ENCODE measurements at regions of chr5 and their contacts with region 1.

Region 1: DNA sequence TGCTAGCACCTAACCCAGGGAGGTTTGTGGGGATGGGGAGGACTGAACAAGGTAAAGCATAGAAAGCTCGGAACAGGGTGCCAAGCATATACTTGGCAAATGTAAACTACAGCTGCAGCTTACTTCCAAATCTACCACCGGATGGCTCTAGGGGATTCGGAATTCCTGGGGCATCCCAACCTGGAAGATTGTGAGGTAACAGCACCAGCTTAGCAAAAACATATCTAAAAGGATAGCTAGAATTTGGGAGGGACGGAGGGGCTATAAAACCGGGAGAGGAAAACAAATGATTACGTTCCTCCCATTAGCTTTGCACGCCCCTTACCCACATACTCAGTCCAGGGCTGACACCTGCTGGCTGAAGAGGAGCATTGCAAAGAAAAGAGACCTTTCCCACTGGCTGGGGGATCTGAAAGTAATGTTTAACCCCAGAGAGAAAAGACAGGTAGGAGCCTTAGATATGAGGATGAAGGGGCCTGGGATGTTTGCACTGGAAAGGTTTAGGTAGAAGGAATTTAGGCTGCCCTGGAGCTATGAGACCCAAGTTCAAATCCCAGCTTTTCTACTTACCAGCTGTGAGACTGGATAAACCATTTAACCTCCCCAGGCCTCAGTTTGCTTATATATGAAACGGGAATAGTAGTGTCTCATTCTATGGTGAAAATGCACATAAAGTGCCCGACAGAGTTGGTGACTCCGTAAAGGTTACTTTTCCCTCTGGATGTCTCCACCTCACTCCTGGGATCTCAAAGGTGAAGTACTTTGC is 73.6 kb downstream of the FAM114A2 start:
- DNase-seq: peak; percentile 91
- H3K4me3 Mint-ChIP-seq: peak overlapping the region; percentile 32
- H3K27ac Mint-ChIP-seq: no peak overlapping the region
- H3K4me1 Mint-ChIP-seq: peaks cover 6% of the 10 kb centered on the region
- H3K27me3 Mint-ChIP-seq: no peaks in the 10 kb centered on the region
- CTCF ChIP-seq: peak; percentile 96

Region 2: DNA sequence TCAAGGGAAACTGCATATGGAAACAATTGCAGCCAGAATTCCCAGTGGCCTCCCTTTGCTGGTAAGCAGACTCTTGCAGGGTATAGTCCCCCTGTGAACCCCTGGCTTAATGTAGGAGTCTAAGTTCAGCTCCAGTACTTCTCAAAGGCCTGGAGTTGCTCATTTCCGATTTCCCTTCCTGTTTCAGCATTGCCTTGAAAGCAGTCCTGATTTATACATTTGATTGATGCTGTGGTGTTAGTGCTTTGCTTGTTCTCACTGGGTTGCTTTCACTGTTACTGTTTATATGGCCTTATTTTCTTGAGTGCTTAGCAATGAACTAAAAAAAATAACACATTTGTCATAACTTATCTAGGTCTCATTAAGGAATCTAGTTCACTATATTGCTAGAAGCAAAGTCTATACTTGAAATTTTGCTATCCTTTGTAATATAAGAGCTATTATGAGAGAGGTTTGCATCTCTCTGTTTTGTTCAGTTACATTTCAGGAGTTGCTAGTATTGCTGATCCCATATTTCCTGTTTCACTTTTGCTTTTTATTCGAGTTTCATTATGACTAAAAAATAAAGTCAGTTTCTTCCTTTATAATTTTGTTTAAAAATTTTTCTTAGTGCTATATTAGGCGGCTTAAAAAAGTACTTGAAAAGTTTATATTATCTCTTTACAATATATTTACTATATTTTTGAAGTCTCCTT is 1437.6 kb before region 1 on chr5:
- CTCF ChIA-PET with region 1: interaction called, 160 read pairs
- POLR2A ChIA-PET with region 1: interaction called, 8 read pairs
- intact Hi-C with region 1: loop called (anchors 1 kb)
- DNase-seq: no peak
- H3K4me3 Mint-ChIP-seq: no peak overlapping the region
- H3K27ac Mint-ChIP-seq: no peak overlapping the region
- H3K4me1 Mint-ChIP-seq: peaks cover 15% of the 10 kb centered on the region
- H3K27me3 Mint-ChIP-seq: no peaks in the 10 kb centered on the region
- CTCF ChIP-seq: no peak

Region 3: GRCh38 chr5:152560512-152561137 is 1404.4 kb before region 1 on chr5:
- CTCF ChIA-PET with region 1: interaction called, 114 read pairs
- POLR2A ChIA-PET with region 1: no interaction called
- intact Hi-C with region 1: loop called (anchors 1 kb)
- DNase-seq: peak; percentile 82
- H3K4me3 Mint-ChIP-seq: no peak overlapping the region
- H3K27ac Mint-ChIP-seq: no peak overlapping the region
- H3K4me1 Mint-ChIP-seq: no peaks in the 10 kb centered on the region
- H3K27me3 Mint-ChIP-seq: no peaks in the 10 kb centered on the region
- CTCF ChIP-seq: peak; percentile 96

Region 4: GRCh38 chr5:153050496-153051179 is 914.4 kb before region 1 on chr5:
- CTCF ChIA-PET with region 1: no interaction called
- POLR2A ChIA-PET with region 1: no interaction called
- intact Hi-C with region 1: no loop called
- DNase-seq: no peak
- H3K4me3 Mint-ChIP-seq: no peak overlapping the region
- H3K27ac Mint-ChIP-seq: no peak overlapping the region
- H3K4me1 Mint-ChIP-seq: peaks cover 11% of the 10 kb centered on the region
- H3K27me3 Mint-ChIP-seq: no peaks in the 10 kb centered on the region
- CTCF ChIP-seq: no peak

Region 5: DNA sequence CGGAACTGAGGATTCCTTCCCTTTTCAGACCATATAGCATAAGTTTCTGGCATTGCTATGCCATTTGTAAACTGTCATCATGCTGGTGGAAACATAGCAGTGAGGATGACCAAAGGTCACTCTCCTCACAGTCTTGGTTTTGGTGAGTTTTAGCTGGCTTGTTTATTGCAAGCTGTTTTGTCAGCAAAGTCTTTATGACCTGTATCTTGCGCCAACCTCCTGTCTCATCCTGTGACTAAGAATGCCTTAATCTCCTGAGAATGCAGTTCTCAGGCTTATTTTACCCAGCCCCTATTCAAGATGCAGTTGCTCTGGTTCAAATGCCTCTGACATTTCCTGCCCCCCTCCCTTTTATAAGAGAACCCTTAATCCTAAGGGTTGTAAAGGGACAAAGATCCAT is 501.3 kb before region 1 on chr5:
- CTCF ChIA-PET with region 1: interaction called, 11 read pairs
- POLR2A ChIA-PET with region 1: no interaction called
- intact Hi-C with region 1: no loop called
- DNase-seq: peak; percentile 64
- H3K4me3 Mint-ChIP-seq: no peak overlapping the region
- H3K27ac Mint-ChIP-seq: no peak overlapping the region
- H3K4me1 Mint-ChIP-seq: peaks cover 13% of the 10 kb centered on the region
- H3K27me3 Mint-ChIP-seq: no peaks in the 10 kb centered on the region
- CTCF ChIP-seq: no peak

Region 6: GRCh38 chr5:153496835-153497234 is 468.2 kb before region 1 on chr5:
- CTCF ChIA-PET with region 1: interaction called, 440 read pairs
- POLR2A ChIA-PET with region 1: interaction called, 15 read pairs
- intact Hi-C with region 1: loop called (anchors 1 kb)
- DNase-seq: peak; percentile 75
- H3K4me3 Mint-ChIP-seq: no peak overlapping the region
- H3K27ac Mint-ChIP-seq: no peak overlapping the region
- H3K4me1 Mint-ChIP-seq: no peaks in the 10 kb centered on the region
- H3K27me3 Mint-ChIP-seq: no peaks in the 10 kb centered on the region
- CTCF ChIP-seq: peak; percentile 97

Region 7: DNA sequence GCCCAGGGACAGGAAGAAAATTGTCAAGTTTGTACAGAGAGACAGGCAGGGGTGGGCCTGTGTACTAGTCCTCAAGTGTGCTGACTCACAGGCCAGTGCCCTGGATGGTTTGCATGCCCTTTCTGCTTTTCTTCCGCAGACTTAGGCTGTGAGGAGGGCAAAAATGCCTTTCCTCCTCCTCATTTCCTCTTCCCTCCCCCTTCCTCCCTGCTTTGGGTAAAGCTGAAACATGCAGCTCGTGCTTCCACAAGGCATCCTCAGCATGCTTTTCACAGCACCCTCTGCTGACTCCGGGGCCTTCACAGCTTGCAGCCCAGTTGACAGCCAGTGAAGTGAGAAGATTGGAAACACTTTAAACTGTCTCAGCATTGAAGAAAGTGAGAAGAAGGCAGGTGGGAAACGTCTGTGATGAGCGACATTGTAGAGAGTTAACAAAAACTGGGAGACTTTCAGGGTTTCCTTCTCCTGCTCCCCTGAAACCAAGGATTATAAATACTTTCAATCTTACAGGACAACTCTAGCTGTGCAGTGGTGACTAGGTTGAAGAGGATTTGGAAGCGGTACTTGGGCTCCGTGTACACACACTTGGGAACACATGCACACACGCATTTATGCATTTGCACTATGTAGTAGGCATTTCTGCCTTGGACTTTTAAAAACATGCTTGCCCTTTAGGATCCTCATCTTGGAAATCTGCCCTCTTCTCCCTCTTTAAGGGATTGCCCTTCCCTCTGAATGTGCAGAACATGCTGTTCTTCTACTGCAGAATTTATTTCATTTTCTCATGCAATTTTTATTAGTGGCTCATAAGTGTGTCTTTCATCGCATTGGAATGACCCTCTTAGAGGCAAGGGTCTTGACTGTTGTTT is 335.8 kb before region 1 on chr5:
- CTCF ChIA-PET with region 1: interaction called, 3 read pairs
- POLR2A ChIA-PET with region 1: no interaction called
- intact Hi-C with region 1: loop called (anchors 1 kb)
- DNase-seq: peak; percentile 96
- H3K4me3 Mint-ChIP-seq: no peak overlapping the region
- H3K27ac Mint-ChIP-seq: no peak overlapping the region
- H3K4me1 Mint-ChIP-seq: peaks cover 11% of the 10 kb centered on the region
- H3K27me3 Mint-ChIP-seq: no peaks in the 10 kb centered on the region
- CTCF ChIP-seq: peak; percentile 56

Region 8: GRCh38 chr5:153987306-153987705 is 22.2 kb after region 1 on chr5:
- CTCF ChIA-PET with region 1: interaction called, 134 read pairs
- POLR2A ChIA-PET with region 1: no interaction called
- intact Hi-C with region 1: no loop called
- DNase-seq: no peak
- H3K4me3 Mint-ChIP-seq: no peak overlapping the region
- H3K27ac Mint-ChIP-seq: no peak overlapping the region
- H3K4me1 Mint-ChIP-seq: no peaks in the 10 kb centered on the region
- H3K27me3 Mint-ChIP-seq: no peaks in the 10 kb centered on the region
- CTCF ChIP-seq: no peak

Region 9: GRCh38 chr5:154238776-154239481 is 273.9 kb after region 1 on chr5:
- CTCF ChIA-PET with region 1: no interaction called
- POLR2A ChIA-PET with region 1: no interaction called
- intact Hi-C with region 1: no loop called
- DNase-seq: no peak
- H3K4me3 Mint-ChIP-seq: no peak overlapping the region
- H3K27ac Mint-ChIP-seq: no peak overlapping the region
- H3K4me1 Mint-ChIP-seq: no peaks in the 10 kb centered on the region
- H3K27me3 Mint-ChIP-seq: no peaks in the 10 kb centered on the region
- CTCF ChIP-seq: no peak